ENCODE measurements at regions of chr13 and their contacts with region 1.

Region 1: GRCh38 chr13:48492470-48493065 is 40.3 kb downstream of the RCBTB2 start:
- DNase-seq: peak; percentile 77
- H3K4me3 Mint-ChIP-seq: no peak overlapping the region
- H3K27ac Mint-ChIP-seq: no peak overlapping the region
- H3K4me1 Mint-ChIP-seq: peaks cover 57% of the 10 kb centered on the region
- H3K27me3 Mint-ChIP-seq: no peaks in the 10 kb centered on the region

Region 2: DNA sequence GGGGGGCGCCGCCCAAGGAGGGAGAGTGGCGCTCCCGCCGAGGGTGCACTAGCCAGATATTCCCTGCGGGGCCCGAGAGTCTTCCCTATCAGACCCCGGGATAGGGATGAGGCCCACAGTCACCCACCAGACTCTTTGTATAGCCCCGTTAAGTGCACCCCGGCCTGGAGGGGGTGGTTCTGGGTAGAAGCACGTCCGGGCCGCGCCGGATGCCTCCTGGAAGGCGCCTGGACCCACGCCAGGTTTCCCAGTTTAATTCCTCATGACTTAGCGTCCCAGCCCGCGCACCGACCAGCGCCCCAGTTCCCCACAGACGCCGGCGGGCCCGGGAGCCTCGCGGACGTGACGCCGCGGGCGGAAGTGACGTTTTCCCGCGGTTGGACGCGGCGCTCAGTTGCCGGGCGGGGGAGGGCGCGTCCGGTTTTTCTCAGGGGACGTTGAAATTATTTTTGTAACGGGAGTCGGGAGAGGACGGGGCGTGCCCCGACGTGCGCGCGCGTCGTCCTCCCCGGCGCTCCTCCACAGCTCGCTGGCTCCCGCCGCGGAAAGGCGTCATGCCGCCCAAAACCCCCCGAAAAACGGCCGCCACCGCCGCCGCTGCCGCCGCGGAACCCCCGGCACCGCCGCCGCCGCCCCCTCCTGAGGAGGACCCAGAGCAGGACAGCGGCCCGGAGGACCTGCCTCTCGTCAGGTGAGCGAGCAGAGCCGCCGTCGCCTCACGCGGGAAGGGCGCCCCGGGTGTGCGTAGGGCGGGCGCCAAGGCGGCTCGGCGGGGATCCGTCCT is 189.0 kb before region 1 on chr13 and contains the start of gene RB1:
- intact Hi-C with region 1: loop called (anchors 5 kb)
- DNase-seq: peak; percentile 89
- H3K4me3 Mint-ChIP-seq: peak within 1 kb of the TSS; percentile 99
- H3K27ac Mint-ChIP-seq: peak within 1 kb of the TSS; percentile 97
- H3K4me1 Mint-ChIP-seq: peaks cover 27% of the 10 kb centered on the region
- H3K27me3 Mint-ChIP-seq: no peaks in the 10 kb centered on the region
- total RNA-seq, gene RB1: 27.1 and 28.0 TPM in 2 replicates

Region 3: GRCh38 chr13:48400850-48401291 is 91.7 kb before region 1 on chr13:
- intact Hi-C with region 1: loop called (anchors 1 kb)
- DNase-seq: no peak
- H3K4me3 Mint-ChIP-seq: peak overlapping the region; percentile 20
- H3K27ac Mint-ChIP-seq: peak overlapping the region; percentile 22
- H3K4me1 Mint-ChIP-seq: peaks cover 49% of the 10 kb centered on the region
- H3K27me3 Mint-ChIP-seq: no peaks in the 10 kb centered on the region

Region 4: GRCh38 chr13:48448959-48449614 is 43.5 kb before region 1 on chr13:
- intact Hi-C with region 1: loop called (anchors 5 kb)
- DNase-seq: no peak
- H3K4me3 Mint-ChIP-seq: peak overlapping the region; percentile 20
- H3K27ac Mint-ChIP-seq: no peak overlapping the region
- H3K4me1 Mint-ChIP-seq: peaks cover 34% of the 10 kb centered on the region
- H3K27me3 Mint-ChIP-seq: no peaks in the 10 kb centered on the region

Region 5: GRCh38 chr13:48532506-48533499 is 40.2 kb after region 1 on chr13 and contains the start of gene RCBTB2:
- intact Hi-C with region 1: loop called (anchors 1 kb)
- DNase-seq: peak; percentile 99
- H3K4me3 Mint-ChIP-seq: peak within 1 kb of the TSS; percentile 90
- H3K27ac Mint-ChIP-seq: peak within 1 kb of the TSS; percentile 89
- H3K4me1 Mint-ChIP-seq: peaks cover 28% of the 10 kb centered on the region
- H3K27me3 Mint-ChIP-seq: peaks cover 2% of the 10 kb centered on the region
- total RNA-seq, gene RCBTB2: 2.7 and 3.4 TPM in 2 replicates

Region 6: DNA sequence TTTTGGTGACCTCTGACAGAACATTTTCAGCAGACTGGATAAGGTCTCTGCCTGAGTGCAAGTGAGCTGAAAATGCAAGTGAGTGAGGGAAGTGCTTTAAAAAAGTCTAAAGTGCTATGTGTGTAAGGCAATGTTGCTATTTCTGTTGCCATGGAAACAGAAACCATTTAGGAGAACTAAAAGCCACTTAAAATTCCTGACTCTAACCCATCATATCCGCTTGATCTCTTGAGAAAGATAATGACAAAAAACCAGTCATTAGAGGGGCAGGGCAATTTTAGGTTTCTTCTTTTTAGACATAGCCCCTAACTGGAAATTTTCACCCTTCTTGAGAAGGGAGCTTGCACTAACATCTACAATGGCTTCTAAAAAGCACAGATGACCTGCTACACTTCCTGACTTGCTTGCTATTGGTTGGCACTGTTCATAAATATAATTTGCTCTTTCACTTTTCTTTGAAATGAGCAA is 160.9 kb after region 1 on chr13 and contains the start of gene CYSLTR2:
- intact Hi-C with region 1: loop called (anchors 5 kb)
- DNase-seq: peak; percentile 28
- H3K4me3 Mint-ChIP-seq: peak within 1 kb of the TSS; percentile 79
- H3K27ac Mint-ChIP-seq: peak within 1 kb of the TSS; percentile 84
- H3K4me1 Mint-ChIP-seq: peaks cover 41% of the 10 kb centered on the region
- H3K27me3 Mint-ChIP-seq: no peaks in the 10 kb centered on the region
- total RNA-seq, gene CYSLTR2: 3.2 and 3.7 TPM in 2 replicates

Measured in activated T-helper 2 cell treated with anti-CD3 and anti-CD28 coated beads, Interferon-gamma antibody, Interleukin-2, Interleukin-4, amounts not matched to agents 10 μg/mL and 5 μg/mL and 100 μg/mL, durations not matched to agents 14 hours and 24 hours and 36 hours (primary cell).